ENCODE measurements at regions of chr3 and their contacts with region 1.

Region 1: GRCh38 chr3:31515486-31516284 is 17.0 kb upstream of the STT3B start:
- DNase-seq: no peak
- ATAC-seq: no peak
- H3K4me3 ChIP-seq: no peak overlapping the region
- H3K27ac ChIP-seq: no peak overlapping the region
- H3K4me1 ChIP-seq: no peaks in the 10 kb centered on the region
- H3K27me3 ChIP-seq: no peaks in the 10 kb centered on the region
- CTCF ChIP-seq: no peak
- POLR2A ChIP-seq: no peak

Region 2: DNA sequence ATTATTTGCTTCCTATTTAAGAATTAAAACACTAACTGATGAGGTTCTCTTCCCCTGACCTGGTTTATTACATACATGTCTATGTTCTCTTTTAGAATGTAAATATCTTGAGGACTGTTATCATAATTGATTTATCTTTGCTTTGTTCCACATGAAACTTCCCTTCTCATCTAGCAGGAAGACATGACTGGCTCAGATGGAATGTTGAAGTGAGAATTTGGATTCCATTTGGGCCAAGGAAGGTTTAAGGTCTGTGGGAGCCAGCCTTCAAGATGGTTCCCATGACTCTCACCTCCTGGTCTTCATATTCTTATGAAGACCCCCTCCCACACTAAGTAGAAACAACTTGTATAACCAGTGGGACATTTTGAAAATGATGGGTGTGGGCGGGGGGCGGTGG is 399.0 kb before region 1 on chr3:
- intact Hi-C with region 1: no loop called
- DNase-seq: no peak
- ATAC-seq: no peak
- H3K4me3 ChIP-seq: no peak overlapping the region
- H3K27ac ChIP-seq: no peak overlapping the region
- H3K4me1 ChIP-seq: no peaks in the 10 kb centered on the region
- H3K27me3 ChIP-seq: no peaks in the 10 kb centered on the region
- CTCF ChIP-seq: no peak
- POLR2A ChIP-seq: no peak

Region 3: DNA sequence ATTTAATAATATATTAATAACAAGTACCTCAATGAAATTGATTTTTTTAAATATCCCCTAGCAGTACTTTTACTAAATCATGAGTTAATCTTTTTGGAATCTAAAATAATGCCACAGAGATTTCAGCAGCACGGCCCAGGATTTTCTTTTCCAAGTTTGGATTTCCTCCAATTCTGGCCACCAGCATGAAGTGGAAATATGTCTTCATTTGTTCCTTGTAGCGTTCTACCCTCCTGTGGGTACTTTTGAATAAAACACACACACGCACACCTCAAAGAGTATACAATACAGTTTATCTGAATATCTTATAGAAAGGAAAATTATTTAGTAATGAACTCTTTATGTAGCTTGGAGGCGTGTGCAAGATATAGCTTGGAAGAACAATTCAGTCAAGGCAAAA is 108.0 kb before region 1 on chr3:
- intact Hi-C with region 1: loop called in 1 of 10 experiments (anchors 10 kb)
- DNase-seq: no peak
- ATAC-seq: no peak
- H3K4me3 ChIP-seq: no peak overlapping the region
- H3K27ac ChIP-seq: no peak overlapping the region
- H3K4me1 ChIP-seq: peaks cover 0 to 11% (median 0%) of the 10 kb centered on the region in 12 donors
- H3K27me3 ChIP-seq: no peaks in the 10 kb centered on the region
- CTCF ChIP-seq: no peak
- POLR2A ChIP-seq: no peak

Measured in heart left ventricle (tissue), 16 donors.